Activated CD4-positive, alpha-beta T cell treated with anti-CD3 and anti-CD28 coated beads for 36 hours (primary cell): ENCODE measurements at regions of chr11 and their contacts with region 1.

Region 1: GRCh38 chr11:1262172-1263006 is 39.5 kb downstream of the MUC5B start:
- DNase-seq: peak; percentile 96
- ATAC-seq: peak; percentile 84
- H3K4me3 Mint-ChIP-seq: peak overlapping the region; percentile 70
- H3K27ac Mint-ChIP-seq: peak overlapping the region; percentile 84
- H3K4me1 Mint-ChIP-seq: peaks cover 14% of the 10 kb centered on the region
- H3K27me3 Mint-ChIP-seq: no peaks in the 10 kb centered on the region

Region 2: DNA sequence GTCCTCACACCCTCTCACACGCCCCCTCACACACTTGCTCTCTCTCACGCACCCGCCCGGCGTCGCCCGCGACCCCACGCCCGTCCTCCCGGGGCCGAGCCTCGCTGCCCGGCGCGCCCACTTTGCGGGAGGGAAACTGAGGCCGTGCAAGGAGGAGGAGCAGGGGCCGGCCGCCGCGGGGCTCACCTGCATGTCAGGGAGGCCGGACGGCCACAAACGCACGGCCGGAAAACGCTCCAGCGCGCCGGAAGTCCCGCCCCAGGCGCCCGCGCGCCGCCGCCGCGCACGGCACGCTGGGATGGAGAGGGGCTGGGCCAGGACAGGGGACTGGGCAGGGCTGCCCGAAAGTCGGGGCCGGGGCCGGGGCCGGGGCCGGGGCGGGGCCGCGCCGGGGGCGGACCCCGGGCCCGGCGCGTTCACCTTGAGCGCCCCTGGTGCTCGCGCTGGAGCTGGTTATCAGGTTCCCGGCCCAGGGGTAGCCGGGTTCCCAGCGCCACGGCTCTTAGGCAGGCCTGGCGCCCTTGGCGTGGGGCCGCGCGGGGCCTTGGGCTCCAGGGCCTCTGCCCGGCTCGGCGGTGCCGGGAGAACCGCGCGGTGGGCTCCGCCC is 351.7 kb before region 1 on chr11 and contains the start of gene CHID1:
- CTCF ChIA-PET with region 1: no interaction called
- POLR2A ChIA-PET with region 1: no interaction called
- intact Hi-C with region 1: loop called in 1 of 2 experiments (anchors 1 kb)
- DNase-seq: peak; percentile 92
- ATAC-seq: peak; percentile 98
- H3K4me3 Mint-ChIP-seq: peak within 1 kb of the TSS; percentile 88
- H3K27ac Mint-ChIP-seq: peak within 1 kb of the TSS; percentile 88
- H3K4me1 Mint-ChIP-seq: peaks cover 24% of the 10 kb centered on the region
- H3K27me3 Mint-ChIP-seq: no peaks in the 10 kb centered on the region
- total RNA-seq, gene CHID1: 60.4 to 75.3 TPM

Region 3: GRCh38 chr11:1309498-1310317 is 47.3 kb after region 1 on chr11 and contains the start of gene TOLLIP:
- CTCF ChIA-PET with region 1: no interaction called
- POLR2A ChIA-PET with region 1: no interaction called
- intact Hi-C with region 1: loop called (anchors 1 kb)
- DNase-seq: peak; percentile 98
- ATAC-seq: peak; percentile 92
- H3K4me3 Mint-ChIP-seq: peak within 1 kb of the TSS; percentile 76
- H3K27ac Mint-ChIP-seq: peak within 1 kb of the TSS; percentile 92
- H3K4me1 Mint-ChIP-seq: peaks cover 40% of the 10 kb centered on the region
- H3K27me3 Mint-ChIP-seq: no peaks in the 10 kb centered on the region
- total RNA-seq, gene TOLLIP: 29.6 to 45.8 TPM

Region 4: GRCh38 chr11:1382831-1383607 is 120.6 kb after region 1 on chr11:
- CTCF ChIA-PET with region 1: no interaction called
- POLR2A ChIA-PET with region 1: no interaction called
- intact Hi-C with region 1: loop called (anchors 1 to 10 kb)
- DNase-seq: peak; percentile 92
- ATAC-seq: peak; percentile 82
- H3K4me3 Mint-ChIP-seq: peak overlapping the region; percentile 66
- H3K27ac Mint-ChIP-seq: peak overlapping the region; percentile 83
- H3K4me1 Mint-ChIP-seq: peaks cover 16% of the 10 kb centered on the region
- H3K27me3 Mint-ChIP-seq: no peaks in the 10 kb centered on the region

Region 5: GRCh38 chr11:1515082-1516060 is 253.0 kb after region 1 on chr11:
- CTCF ChIA-PET with region 1: no interaction called
- POLR2A ChIA-PET with region 1: no interaction called
- intact Hi-C with region 1: loop called (anchors 1 to 10 kb)
- DNase-seq: peak; percentile 88
- ATAC-seq: peak; percentile 86
- H3K4me3 Mint-ChIP-seq: no peak overlapping the region
- H3K27ac Mint-ChIP-seq: no peak overlapping the region
- H3K4me1 Mint-ChIP-seq: peaks cover 44% of the 10 kb centered on the region
- H3K27me3 Mint-ChIP-seq: no peaks in the 10 kb centered on the region